Activated T-helper 1 cell treated with anti-CD3 and anti-CD28 coated beads, Interleukin-12 subunit alpha, Interleukin-12 subunit beta, Interleukin-2, Interleukin-4 antibody, amounts not matched to agents 30 ng/mL and 10 ng/mL and 1 ng/mL, durations not matched to agents 14 hours and 24 hours and 36 hours (primary cell): ENCODE measurements at regions of chr3 and their contacts with region 1.

Region 1: GRCh38 chr3:23999012-23999641 is 54.0 kb downstream of the NR1D2 start:
- DNase-seq: peak; percentile 37
- H3K4me3 Mint-ChIP-seq: no peak overlapping the region
- H3K27ac Mint-ChIP-seq: no peak overlapping the region
- H3K4me1 Mint-ChIP-seq: peaks cover 2% of the 10 kb centered on the region
- H3K27me3 Mint-ChIP-seq: peaks cover 10% of the 10 kb centered on the region

Region 2: DNA sequence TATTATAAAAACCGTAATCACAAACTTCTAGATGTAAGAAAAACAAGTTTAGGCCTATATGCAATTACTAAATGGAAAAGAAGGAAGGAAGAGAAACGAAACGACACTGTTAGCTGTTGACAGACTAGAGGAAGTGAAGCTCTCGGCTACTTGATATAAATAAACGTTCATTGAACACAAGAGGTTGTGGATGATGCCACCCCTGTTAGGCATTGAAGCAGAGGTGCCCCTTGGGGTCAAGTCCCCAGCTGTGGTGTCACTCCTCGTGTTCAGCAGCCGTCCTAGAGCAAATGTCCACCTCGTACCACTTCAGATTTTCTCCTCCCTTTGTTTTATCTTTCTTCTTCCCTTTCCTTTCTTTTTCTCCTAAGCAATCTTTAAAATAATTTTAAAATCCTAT is 339.9 kb before region 1 on chr3:
- intact Hi-C with region 1: no loop called
- DNase-seq: no peak
- H3K4me3 Mint-ChIP-seq: no peak overlapping the region
- H3K27ac Mint-ChIP-seq: no peak overlapping the region
- H3K4me1 Mint-ChIP-seq: no peaks in the 10 kb centered on the region
- H3K27me3 Mint-ChIP-seq: peaks cover 7% of the 10 kb centered on the region

Region 3: DNA sequence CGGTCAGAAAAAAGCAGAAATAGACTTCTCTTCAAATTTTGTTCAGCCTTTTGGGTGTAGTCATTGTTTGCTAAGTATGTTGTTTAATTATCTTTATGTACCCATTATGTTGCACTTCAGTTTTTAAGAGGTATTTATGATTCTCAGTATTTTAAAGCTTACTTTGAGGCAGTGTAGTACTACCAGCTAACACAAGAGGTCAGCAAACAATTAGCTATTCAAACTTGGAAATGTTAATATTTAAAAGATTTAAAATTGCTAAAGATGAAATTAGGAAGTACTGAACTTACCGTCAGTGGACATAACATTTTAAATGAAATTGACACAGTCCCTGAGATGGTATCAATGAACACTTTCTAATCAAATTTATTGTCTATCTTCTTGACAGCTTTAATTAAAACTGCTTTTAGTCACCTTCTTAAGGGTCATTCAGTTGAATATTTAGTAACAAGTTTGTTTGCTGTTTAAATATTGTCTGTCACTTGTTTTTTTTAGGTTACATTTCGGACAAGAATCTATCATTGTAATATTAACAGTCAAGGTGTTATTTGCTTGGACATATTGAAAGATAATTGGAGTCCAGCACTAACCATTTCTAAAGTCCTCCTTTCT is 110.4 kb before region 1 on chr3:
- intact Hi-C with region 1: loop called (anchors 5 kb)
- DNase-seq: no peak
- H3K4me3 Mint-ChIP-seq: no peak overlapping the region
- H3K27ac Mint-ChIP-seq: no peak overlapping the region
- H3K4me1 Mint-ChIP-seq: no peaks in the 10 kb centered on the region
- H3K27me3 Mint-ChIP-seq: no peaks in the 10 kb centered on the region

Region 4: DNA sequence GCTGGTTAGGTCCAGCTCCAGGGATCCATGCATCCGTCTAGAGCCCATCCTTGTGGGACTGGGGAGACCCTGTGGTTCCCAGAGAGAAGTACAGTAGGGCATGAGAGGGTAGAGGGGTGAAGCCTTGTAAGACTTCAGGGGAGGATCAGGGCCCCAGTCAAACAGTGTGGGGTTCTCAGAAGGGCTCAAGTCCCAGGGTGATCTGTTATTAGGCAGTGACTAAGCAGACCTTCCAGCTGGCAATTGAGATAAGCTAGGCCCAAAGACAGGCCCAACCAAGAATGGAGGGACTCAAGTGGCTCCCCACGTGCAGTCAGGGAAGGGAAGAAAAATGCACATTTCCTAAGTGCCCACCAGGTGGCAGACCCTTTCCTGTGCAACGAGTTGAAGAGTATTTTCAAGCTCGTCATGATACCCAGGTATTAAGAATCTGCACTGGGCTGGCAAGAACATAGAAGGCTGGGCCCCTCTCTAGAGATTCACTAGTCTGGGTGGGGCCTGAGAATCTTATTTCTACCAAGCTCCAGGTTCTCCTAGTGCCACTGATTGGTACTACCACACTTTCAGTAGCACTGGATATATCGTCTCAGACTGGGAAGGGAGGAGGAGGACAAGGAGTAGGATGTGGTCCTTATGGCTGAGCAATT is 186.7 kb after region 1 on chr3:
- intact Hi-C with region 1: loop called (anchors 1 kb)
- DNase-seq: peak; percentile 2
- H3K4me3 Mint-ChIP-seq: no peak overlapping the region
- H3K27ac Mint-ChIP-seq: no peak overlapping the region
- H3K4me1 Mint-ChIP-seq: no peaks in the 10 kb centered on the region
- H3K27me3 Mint-ChIP-seq: peaks cover 2% of the 10 kb centered on the region

Region 5: DNA sequence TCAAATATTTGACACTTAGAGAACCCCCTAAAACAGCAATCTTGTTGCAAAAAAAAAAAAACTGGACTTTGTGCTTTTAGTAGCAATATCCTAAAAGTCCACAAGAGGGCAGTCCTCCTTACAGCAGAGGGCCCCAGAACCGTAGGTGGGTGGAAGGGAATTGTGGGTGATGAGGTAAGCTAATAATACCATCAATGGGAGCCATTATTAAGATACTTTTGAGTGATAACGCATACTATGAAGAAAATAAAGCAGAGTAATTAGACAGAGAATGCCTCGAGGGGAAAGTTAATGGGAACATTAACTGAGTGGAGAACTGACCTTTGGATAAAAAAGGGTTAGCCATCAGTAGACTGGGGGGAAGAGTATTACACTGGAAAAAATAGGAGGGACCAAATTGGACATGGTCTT is 265.6 kb after region 1 on chr3:
- intact Hi-C with region 1: loop called (anchors 1 kb)
- DNase-seq: no peak
- H3K4me3 Mint-ChIP-seq: no peak overlapping the region
- H3K27ac Mint-ChIP-seq: no peak overlapping the region
- H3K4me1 Mint-ChIP-seq: no peaks in the 10 kb centered on the region
- H3K27me3 Mint-ChIP-seq: peaks cover 8% of the 10 kb centered on the region

Region 6: DNA sequence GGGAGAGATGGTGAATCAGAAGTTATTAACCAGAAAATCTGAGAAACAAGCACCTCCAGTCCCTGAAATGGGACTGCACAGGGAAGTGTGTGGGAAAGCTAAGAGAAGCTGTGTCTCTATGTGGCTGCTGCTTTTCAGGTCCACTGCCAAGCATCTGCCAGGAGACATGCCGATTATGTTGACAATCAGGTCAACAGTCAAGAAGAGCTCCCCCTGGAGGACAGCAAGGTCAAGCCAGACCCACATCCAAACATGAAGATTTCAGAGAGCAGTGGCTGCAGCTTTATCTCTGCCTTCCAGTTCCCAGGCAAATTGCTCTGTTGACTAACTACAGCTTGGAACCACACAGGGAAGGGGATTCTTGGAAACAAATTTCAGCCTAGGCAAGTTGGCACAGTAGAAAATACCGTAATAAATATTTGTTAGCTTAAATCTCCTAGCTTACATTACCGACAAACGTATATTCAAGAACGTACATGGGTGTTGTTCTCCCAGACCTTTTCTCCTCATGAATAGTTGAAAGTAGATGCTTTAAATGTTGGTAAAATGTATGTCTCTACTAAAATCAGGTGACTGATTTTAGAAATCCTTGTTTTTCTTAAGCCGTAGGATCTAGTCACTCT is 1034.4 kb after region 1 on chr3:
- intact Hi-C with region 1: loop called (anchors 10 kb)
- DNase-seq: no peak
- H3K4me3 Mint-ChIP-seq: no peak overlapping the region
- H3K27ac Mint-ChIP-seq: no peak overlapping the region
- H3K4me1 Mint-ChIP-seq: no peaks in the 10 kb centered on the region
- H3K27me3 Mint-ChIP-seq: no peaks in the 10 kb centered on the region